ENCODE measurements at regions of chr7 and their contacts with region 1.

Region 1: DNA sequence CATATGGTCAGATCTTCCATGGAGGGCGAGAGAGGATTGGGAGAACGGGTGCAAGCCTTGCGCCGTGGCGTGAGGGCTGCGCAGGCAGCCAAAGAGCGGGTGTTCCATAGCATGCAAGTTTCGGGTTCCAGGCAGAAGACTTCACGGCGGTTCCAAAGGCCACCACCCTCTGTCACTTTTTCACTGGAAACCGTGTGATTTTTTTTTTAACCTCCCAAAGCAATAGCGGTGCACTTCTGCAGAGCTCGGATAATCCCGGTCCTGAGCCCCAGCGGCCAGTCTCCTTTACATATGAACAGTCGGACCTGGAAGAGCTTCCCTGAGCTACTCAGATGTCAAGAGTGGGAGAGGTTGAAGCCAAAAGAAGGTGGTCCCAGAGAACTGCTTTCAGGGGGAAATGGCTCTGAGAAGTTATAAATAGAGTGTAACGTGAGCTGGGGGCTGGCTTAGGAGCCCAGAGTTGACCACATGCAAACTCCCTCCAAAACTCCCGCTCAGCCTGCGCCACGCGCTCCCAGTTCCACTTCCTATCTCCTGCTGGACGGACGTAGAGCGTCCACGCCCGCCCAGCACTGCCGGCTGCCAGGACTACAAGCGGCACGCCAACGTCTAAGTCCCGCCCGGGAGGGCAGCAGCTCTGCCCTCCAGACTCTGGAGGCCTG is at the start of gene MEOX2:
- DNase-seq: peak; percentile 86 to 91
- ATAC-seq: peak; percentile 90 to 96 (median 94)
- H3K4me3 ChIP-seq: peak within 1 kb of the TSS; percentile 62 to 79 (median 70)
- H3K27ac ChIP-seq: peak within 1 kb of the TSS; percentile 86 to 95 (median 90)
- H3K4me1 ChIP-seq: peaks cover 0 to 16% (median 0%) of the 10 kb centered on the region in 9 donors
- H3K27me3 ChIP-seq: peaks cover 0 to 60% (median 5%) of the 10 kb centered on the region in 7 donors
- CTCF ChIP-seq: no peak
- total RNA-seq, gene MEOX2: 5.2 to 13.5 (median 7.9) TPM

Region 2: DNA sequence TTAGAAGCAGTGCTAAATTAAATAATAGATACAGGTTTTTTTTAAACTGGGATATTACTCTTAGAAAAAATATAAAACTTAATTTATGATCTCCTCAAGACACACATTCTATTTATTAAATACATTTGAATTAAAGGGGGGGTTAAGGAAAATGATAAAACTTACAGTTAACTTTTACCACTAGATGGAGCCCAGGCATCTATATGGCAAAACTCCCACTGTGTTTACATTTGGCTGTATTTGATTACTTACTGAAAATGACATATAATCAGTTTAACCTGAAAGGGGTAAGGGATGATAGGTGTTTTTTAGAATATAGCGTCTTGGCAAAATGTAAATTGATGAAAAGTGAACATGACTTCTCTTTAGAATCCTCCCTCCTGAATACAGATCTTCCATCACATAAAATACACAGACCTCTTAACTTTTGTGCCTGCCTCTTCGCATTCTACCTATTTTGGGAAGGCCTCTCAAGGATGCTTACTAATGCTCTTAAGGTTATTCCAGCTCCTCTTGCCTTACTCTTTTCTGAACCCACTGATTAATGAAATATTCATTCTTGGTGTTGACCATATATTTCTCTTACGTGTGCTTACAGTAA is 360.3 kb before region 1 on chr7:
- intact Hi-C with region 1: loop called in 2 of 10 experiments (anchors 10 kb)
- DNase-seq: no peak
- ATAC-seq: no peak
- H3K4me3 ChIP-seq: no peak overlapping the region
- H3K27ac ChIP-seq: no peak overlapping the region
- H3K4me1 ChIP-seq: peaks cover 0 to 10% (median 0%) of the 10 kb centered on the region in 9 donors
- H3K27me3 ChIP-seq: no peaks in the 10 kb centered on the region
- CTCF ChIP-seq: peak; percentile 32 to 79 (median 60)

Region 3: DNA sequence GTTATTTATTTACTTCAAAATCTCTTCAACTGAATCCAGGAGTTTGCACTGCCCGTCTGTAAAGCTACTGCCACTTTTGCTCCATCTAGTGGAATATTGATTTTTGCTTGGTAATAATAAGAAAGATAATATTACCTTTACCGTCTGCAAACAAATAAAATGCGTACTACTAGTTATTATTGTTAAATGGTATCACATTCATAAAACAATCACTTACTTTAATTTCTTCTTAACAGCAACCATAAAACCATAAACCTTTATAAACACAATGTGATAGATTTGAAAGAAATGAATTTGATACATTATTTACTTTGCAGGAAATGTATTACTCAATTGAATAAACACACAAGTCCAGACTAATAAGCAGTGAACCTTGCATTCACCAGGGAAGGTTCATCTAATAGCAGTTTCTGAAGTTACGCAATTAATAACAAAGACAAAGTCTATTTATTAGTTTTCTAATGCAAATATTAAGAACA is 131.0 kb before region 1 on chr7:
- intact Hi-C with region 1: loop called in 6 of 10 experiments (anchors 2 to 5 kb)
- DNase-seq: no peak
- ATAC-seq: peak in 1 of 8 donors; percentile 52
- H3K4me3 ChIP-seq: no peak overlapping the region
- H3K27ac ChIP-seq: peak overlapping the region in 2 of 10 donors; percentile 79 to 89
- H3K4me1 ChIP-seq: peaks cover 0 to 42% (median 0%) of the 10 kb centered on the region in 9 donors
- H3K27me3 ChIP-seq: no peaks in the 10 kb centered on the region
- CTCF ChIP-seq: peak in 7 of 9 donors; percentile 7 to 58 (median 43)

Region 4: GRCh38 chr7:15764851-15765382 is 78.5 kb after region 1 on chr7:
- intact Hi-C with region 1: loop called in 1 of 10 experiments (anchors 5 kb)
- DNase-seq: peak in 1 of 2 donors; percentile 60
- ATAC-seq: peak; percentile 50 to 86 (median 81)
- H3K4me3 ChIP-seq: no peak overlapping the region
- H3K27ac ChIP-seq: peak overlapping the region in 9 of 10 donors; percentile 25 to 84 (median 55)
- H3K4me1 ChIP-seq: peaks cover 0 to 32% (median 14%) of the 10 kb centered on the region in 9 donors
- H3K27me3 ChIP-seq: no peaks in the 10 kb centered on the region
- CTCF ChIP-seq: no peak

Region 5: GRCh38 chr7:16062269-16062668 is 375.8 kb after region 1 on chr7:
- intact Hi-C with region 1: loop called in 6 of 10 experiments (anchors 2 to 10 kb)
- DNase-seq: no peak
- ATAC-seq: peak; percentile 44 to 85 (median 74)
- H3K4me3 ChIP-seq: peak overlapping the region in 1 of 10 donors; percentile 16
- H3K27ac ChIP-seq: peak overlapping the region; percentile 18 to 89 (median 79)
- H3K4me1 ChIP-seq: peaks cover 0 to 70% (median 56%) of the 10 kb centered on the region in 9 donors
- H3K27me3 ChIP-seq: no peaks in the 10 kb centered on the region
- CTCF ChIP-seq: no peak

Region 6: GRCh38 chr7:16091701-16092310 is 405.4 kb after region 1 on chr7:
- intact Hi-C with region 1: no loop called
- DNase-seq: no peak
- ATAC-seq: peak in 1 of 8 donors; percentile 74
- H3K4me3 ChIP-seq: no peak overlapping the region
- H3K27ac ChIP-seq: peak overlapping the region in 1 of 10 donors; percentile 17
- H3K4me1 ChIP-seq: peaks cover 0 to 25% (median 7%) of the 10 kb centered on the region in 9 donors
- H3K27me3 ChIP-seq: no peaks in the 10 kb centered on the region
- CTCF ChIP-seq: no peak

Measured in heart right ventricle (tissue), 16 donors.